ENCODE measurements at regions of chr20 and their contacts with region 1.

Region 1: GRCh38 chr20:59850018-59850641 is 83.3 kb downstream of the SYCP2 start:
- DNase-seq: peak; percentile 57
- H3K4me3 ChIP-seq: no peak overlapping the region
- H3K27ac ChIP-seq: no peak overlapping the region
- H3K4me1 ChIP-seq: no peaks in the 10 kb centered on the region
- H3K27me3 ChIP-seq: peaks cover 19% of the 10 kb centered on the region
- CTCF ChIP-seq: peak; percentile 66

Region 2: DNA sequence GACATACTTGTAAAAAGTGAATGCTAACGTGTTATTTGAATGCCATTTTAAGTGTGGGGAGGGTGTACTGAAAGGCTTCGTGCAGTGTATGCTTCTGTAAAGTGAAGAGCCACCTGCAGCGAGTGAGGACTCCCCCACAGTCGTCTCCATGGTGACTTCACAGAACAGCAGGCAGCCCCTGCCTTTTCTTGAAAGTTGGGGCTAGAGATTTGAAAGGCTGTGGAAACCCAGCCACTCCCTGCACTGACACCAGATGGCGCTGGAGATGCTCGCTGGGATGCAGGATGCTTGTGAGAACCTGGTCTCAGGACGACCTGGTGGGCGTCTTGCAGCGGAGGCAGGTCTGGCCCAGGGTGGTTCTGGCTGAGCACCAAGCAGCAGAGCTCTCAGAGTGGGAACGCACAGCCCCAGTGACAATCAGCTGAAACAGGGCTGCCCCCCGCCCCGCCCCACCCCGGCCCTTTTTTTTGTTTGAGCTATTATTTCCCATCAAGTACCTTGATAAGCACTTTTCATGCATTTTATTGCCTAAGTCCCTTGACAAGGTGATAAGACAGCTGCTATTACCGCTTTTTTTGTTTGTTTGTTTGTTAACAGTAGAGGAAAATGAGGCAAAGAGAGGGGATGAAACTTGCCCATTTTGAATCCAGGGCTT is 67.0 kb before region 1 on chr20:
- CTCF ChIA-PET with region 1: interaction called, 3 read pairs
- POLR2A ChIA-PET with region 1: no interaction called
- intact Hi-C with region 1: loop called (anchors 2 kb)
- DNase-seq: peak; percentile 69
- H3K4me3 ChIP-seq: no peak overlapping the region
- H3K27ac ChIP-seq: no peak overlapping the region
- H3K4me1 ChIP-seq: no peaks in the 10 kb centered on the region
- H3K27me3 ChIP-seq: no peaks in the 10 kb centered on the region
- CTCF ChIP-seq: peak; percentile 91

Region 3: DNA sequence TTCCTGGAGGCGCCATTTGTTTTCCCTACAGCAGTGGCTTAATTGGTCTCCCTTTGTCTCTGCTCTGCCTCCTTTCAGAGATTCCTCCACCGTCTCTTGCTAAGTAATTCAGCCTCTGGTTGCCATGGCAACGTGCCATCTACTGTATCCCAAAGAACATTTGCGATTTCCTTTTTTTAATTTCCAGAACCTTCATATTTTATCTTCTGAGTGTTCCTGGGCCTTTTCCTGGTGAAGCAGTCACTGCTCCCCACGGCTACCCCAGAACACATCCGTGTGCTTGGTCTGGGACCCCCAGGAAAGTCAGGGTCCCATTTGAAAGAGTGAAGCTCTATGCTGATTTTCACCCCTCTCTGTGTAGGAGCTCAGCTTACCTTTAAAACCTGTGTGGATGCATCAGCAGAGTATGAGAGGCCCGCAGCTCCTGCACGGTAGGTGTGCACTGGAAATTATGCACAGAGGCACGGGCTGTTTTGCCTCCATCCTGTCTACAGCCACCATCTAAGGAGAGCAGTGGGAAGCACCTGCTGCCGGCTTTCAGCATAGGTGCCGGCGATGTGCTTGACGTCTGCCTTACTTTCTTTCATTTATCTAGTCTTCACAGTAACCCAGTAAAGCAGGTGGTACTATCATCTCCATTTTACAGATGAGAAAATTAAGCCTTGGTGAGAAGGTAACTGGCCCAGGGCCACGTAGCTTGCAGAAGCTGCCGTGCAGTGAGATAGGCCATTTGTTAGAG is 39.5 kb before region 1 on chr20:
- CTCF ChIA-PET with region 1: no interaction called
- POLR2A ChIA-PET with region 1: no interaction called
- intact Hi-C with region 1: no loop called
- DNase-seq: no peak
- H3K4me3 ChIP-seq: no peak overlapping the region
- H3K27ac ChIP-seq: no peak overlapping the region
- H3K4me1 ChIP-seq: no peaks in the 10 kb centered on the region
- H3K27me3 ChIP-seq: no peaks in the 10 kb centered on the region
- CTCF ChIP-seq: no peak

Region 4: DNA sequence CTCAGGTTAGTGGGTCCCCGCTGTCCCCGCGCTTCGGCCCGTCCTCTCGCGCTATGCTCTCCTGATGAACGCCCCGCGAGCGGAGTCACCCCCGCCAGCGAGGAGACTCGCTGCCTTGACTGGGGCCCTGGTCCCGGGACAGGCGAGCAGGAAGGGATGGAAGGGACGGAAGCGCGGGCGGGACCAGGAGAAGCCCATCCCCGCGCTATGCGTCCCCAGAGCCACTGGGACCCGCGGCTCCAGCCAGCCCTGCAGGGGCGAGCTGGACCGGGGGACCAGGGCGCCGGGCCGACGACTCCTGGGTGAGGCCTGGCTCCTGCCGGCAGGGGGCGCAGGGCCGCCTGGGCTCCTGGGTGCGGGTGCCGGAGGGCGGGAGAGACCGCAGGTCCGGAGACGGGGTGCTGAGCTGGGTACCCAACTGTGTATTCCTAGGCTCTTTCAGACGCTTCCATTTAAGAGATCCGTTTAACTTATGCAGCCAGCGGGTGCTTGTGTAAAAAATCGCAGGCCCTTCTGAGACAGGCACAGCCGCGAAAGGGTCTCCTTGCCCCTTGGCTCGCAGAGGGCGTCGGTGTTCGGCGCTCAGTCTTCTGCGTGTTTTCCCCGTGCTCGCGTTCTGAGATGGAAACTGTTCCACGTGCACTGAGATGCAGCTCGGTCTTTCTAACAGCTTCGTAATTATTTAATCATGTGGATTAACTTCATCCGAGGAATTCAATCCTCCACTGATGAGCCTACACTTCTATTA is 83.9 kb after region 1 on chr20:
- CTCF ChIA-PET with region 1: no interaction called
- POLR2A ChIA-PET with region 1: no interaction called
- intact Hi-C with region 1: no loop called
- DNase-seq: peak; percentile 9
- H3K4me3 ChIP-seq: no peak overlapping the region
- H3K27ac ChIP-seq: no peak overlapping the region
- H3K4me1 ChIP-seq: peaks cover 12% of the 10 kb centered on the region
- H3K27me3 ChIP-seq: no peaks in the 10 kb centered on the region
- CTCF ChIP-seq: peak; percentile 49

Region 5: DNA sequence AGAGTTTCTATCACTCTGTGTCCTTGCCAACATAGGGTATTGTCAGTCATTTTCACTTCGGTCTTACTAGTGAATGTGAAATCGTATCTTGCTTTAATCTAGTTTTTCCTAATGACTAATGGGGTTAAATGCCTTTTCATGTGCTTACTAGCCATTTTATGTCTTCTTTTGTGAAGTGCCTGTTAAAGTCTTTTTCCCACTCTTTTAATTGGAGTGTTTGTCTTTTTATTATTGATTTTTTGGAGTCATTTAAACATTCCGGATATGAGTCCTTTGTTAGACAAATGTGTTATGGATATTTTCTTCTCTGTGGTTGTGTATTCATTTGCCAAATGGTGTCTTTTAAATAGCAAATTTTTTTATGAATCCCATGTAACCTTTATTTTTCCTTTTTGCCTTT is 302.7 kb after region 1 on chr20:
- CTCF ChIA-PET with region 1: no interaction called
- POLR2A ChIA-PET with region 1: no interaction called
- intact Hi-C with region 1: no loop called
- DNase-seq: no peak
- H3K4me3 ChIP-seq: no peak overlapping the region
- H3K27ac ChIP-seq: no peak overlapping the region
- H3K4me1 ChIP-seq: no peaks in the 10 kb centered on the region
- H3K27me3 ChIP-seq: peaks cover 9% of the 10 kb centered on the region
- CTCF ChIP-seq: no peak

Measured in A673 (cell line).